ENCODE measurements at regions of chr22 and their contacts with region 1.

Region 1: GRCh38 chr22:30186510-30186909 is 60.0 kb downstream of the LIF start:
- DNase-seq: no peak
- H3K4me3 ChIP-seq: no peak overlapping the region
- H3K27ac ChIP-seq: no peak overlapping the region
- H3K4me1 ChIP-seq: peaks cover 7% of the 10 kb centered on the region; the same call in 1 of the 2 replicates
- H3K27me3 ChIP-seq: no peaks in the 10 kb centered on the region
- CTCF ChIP-seq: no peak

Region 2: DNA sequence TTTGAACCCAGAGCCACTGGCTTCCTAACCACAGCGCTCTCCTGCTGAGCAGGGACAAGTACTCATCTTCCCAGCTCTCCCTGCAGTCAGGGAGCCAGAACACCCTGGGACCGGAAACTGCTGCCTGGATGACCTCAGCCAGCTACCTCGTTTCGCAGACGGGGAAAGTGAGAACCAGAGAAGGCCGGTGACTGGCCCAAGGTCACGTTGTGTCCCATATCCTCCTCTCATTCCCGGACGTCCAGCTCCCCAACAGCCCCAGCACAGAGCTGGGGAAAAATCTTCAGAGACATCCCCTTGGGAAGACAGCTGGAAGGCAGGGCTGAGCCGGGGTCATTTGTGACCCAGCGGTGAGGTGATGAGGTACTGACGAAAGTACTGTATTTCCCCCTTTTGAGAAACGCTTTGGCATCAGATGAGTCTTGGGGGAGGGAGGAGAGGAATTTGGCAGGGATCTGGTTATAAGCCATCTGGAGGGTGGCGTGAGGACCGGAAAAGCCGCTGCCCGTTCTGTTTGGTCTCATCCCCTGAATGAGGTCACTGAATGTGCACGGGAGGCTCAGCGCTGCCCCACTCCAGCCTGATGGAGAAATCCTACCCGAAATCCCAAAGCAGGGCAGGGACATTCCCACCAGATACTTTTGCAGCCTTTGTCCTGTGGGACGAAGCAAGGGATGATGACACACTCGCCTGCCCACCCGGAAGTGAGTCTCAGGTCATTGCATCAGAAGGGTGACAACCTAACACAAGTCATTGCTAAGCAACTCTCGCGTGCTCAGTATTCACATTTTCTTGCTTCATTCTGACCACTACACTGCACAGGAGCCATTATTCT is 19.0 kb after region 1 on chr22:
- CTCF ChIA-PET with region 1: interaction called, 15 read pairs
- POLR2A ChIA-PET with region 1: no interaction called
- intact Hi-C with region 1: no loop called
- DNase-seq: peak in 1 of 2 experiments; percentile 91
- H3K4me3 ChIP-seq: peak overlapping the region; percentile 27; the same call in 1 of the 2 replicates
- H3K27ac ChIP-seq: peak overlapping the region; percentile 98
- H3K4me1 ChIP-seq: peaks cover 88% of the 10 kb centered on the region
- H3K27me3 ChIP-seq: no peaks in the 10 kb centered on the region
- CTCF ChIP-seq: no peak